ENCODE measurements at regions of chr13 and their contacts with region 1.

Region 1: GRCh38 chr13:30802953-30803478 is 67.7 kb downstream of the ALOX5AP start:
- DNase-seq: peak; percentile 80
- H3K4me3 Mint-ChIP-seq: peak overlapping the region; percentile 68
- H3K27ac Mint-ChIP-seq: peak overlapping the region; percentile 7
- H3K4me1 Mint-ChIP-seq: peaks cover 11% of the 10 kb centered on the region
- H3K27me3 Mint-ChIP-seq: no peaks in the 10 kb centered on the region
- CTCF ChIP-seq: peak; percentile 96

Region 2: DNA sequence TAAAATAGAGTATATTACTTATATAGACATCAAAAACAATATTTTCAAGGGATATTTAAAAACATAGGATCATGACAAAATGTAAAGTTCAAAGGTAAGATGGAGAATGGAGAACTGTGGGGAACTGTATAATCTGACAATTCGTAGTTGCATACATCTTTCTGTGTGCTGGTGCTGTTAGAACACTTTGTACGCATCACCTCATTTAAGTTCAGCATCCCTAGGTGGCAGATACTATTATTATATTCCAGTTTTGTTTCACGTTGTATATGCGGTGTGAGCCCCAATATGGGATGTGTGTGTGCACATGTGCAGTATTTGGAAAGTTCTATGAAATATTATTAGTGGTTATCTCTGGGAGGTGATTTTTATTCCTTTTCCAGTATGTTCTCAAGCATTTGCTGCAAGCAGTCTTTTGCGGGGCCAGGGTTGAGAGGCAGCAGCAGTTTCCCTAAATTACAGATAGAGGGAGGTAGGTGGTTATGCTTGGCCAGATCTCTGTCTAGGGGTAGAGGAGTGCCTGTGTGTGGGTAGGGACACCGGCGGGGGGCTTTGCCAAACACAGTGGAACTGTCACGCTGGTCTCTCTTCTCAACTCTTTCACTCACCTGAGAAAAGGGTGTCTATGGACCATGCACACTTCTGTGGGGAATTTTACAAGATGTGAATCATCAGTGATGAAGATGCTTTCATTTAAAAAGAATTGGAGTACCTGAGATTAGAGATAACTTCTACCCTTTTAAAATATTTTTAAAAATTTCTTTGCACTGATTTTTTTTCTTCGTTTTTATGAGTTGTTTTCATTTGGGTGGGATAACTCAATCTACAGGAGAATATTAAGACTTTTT is 123.3 kb before region 1 on chr13:
- CTCF ChIA-PET with region 1: interaction called, 4 read pairs
- POLR2A ChIA-PET with region 1: no interaction called
- intact Hi-C with region 1: loop called (anchors 1 kb)
- DNase-seq: peak; percentile 44
- H3K4me3 Mint-ChIP-seq: no peak overlapping the region
- H3K27ac Mint-ChIP-seq: no peak overlapping the region
- H3K4me1 Mint-ChIP-seq: no peaks in the 10 kb centered on the region
- H3K27me3 Mint-ChIP-seq: no peaks in the 10 kb centered on the region
- CTCF ChIP-seq: peak; percentile 41

Region 3: DNA sequence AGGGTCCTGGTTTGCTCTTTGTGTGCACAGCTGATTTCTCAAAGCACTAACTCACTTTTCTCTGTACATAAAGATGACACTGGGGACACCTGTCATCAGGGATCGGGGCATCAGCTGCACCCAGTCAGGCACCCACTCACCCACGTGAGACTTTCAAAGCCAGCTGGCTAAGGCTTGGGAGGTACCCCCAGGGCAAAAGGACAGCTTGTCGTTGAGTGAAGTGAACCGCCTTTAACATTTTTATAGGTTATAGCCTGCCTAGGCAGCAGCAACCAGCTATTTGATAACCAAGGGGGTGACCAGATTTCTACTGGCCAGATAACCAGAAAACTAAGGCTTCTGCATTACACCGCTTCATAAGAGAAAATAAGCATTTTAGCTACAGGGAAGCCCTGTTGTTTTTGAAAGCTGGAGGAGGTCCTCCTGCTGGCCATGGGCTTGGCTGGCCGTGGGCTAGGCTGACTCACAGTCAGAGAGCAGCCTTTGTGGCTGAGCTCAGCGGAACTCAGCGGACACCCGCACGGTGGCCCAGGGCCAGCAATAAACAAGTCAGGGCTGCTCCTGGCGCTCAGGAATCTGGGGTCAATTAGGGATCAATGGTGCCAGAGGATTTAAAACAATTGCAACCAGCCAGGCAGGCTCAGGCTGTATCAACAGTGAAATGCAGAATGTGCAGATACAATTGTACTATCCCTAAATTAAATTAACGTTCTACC is 10.6 kb before region 1 on chr13:
- CTCF ChIA-PET with region 1: interaction called, 15 read pairs
- POLR2A ChIA-PET with region 1: interaction called, 6 read pairs
- intact Hi-C with region 1: no loop called
- DNase-seq: peak; percentile 92
- H3K4me3 Mint-ChIP-seq: no peak overlapping the region
- H3K27ac Mint-ChIP-seq: no peak overlapping the region
- H3K4me1 Mint-ChIP-seq: peaks cover 22% of the 10 kb centered on the region
- H3K27me3 Mint-ChIP-seq: no peaks in the 10 kb centered on the region
- CTCF ChIP-seq: peak; percentile 42

Region 4: GRCh38 chr13:30877335-30877734 is 74.3 kb after region 1 on chr13:
- CTCF ChIA-PET with region 1: no interaction called
- POLR2A ChIA-PET with region 1: no interaction called
- intact Hi-C with region 1: no loop called
- DNase-seq: peak; percentile 8
- H3K4me3 Mint-ChIP-seq: no peak overlapping the region
- H3K27ac Mint-ChIP-seq: no peak overlapping the region
- H3K4me1 Mint-ChIP-seq: peaks cover 9% of the 10 kb centered on the region
- H3K27me3 Mint-ChIP-seq: no peaks in the 10 kb centered on the region
- CTCF ChIP-seq: no peak

Region 5: GRCh38 chr13:31012655-31013024 is 209.6 kb after region 1 on chr13:
- CTCF ChIA-PET with region 1: interaction called, 7 read pairs
- POLR2A ChIA-PET with region 1: no interaction called
- intact Hi-C with region 1: loop called (anchors 2 kb)
- DNase-seq: peak; percentile 50
- H3K4me3 Mint-ChIP-seq: no peak overlapping the region
- H3K27ac Mint-ChIP-seq: no peak overlapping the region
- H3K4me1 Mint-ChIP-seq: peaks cover 5% of the 10 kb centered on the region
- H3K27me3 Mint-ChIP-seq: no peaks in the 10 kb centered on the region
- CTCF ChIP-seq: peak; percentile 35